ENCODE measurements at regions of chr5 and their contacts with region 1.

Region 1: DNA sequence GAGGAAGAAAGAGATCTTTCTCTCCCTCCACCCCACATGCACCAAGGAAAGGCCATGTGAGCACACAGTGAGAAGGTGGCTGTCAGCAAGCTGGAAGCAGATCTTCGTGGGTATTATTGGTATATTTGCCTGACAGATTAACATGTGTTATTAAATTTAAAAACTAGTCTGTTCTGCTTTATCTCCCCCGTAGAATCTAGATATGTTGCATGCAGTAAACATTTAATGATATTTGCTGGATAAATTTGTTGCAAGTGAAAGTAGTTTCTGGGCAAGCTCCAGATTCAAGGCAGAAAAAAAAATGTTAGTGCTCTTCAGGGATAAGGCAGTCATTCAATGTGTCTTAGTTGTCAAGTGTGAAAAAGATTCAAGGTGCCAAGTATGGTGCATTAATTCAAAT is 215.0 kb upstream of the TAS2R1 start:
- DNase-seq: no peak
- H3K4me3 ChIP-seq: no peak overlapping the region
- H3K27ac ChIP-seq: no peak overlapping the region
- H3K4me1 ChIP-seq: peaks cover 0 to 2% of the 10 kb centered on the region in 2 experiments; a peak in 1 of 4 replicates
- H3K27me3 ChIP-seq: no peaks in the 10 kb centered on the region
- CTCF ChIP-seq: no peak
- EP300 ChIP-seq: peak in 1 of 2 experiments; percentile 63; a peak in 1 of 4 replicates
- RAD21 ChIP-seq: no peak

Region 2: DNA sequence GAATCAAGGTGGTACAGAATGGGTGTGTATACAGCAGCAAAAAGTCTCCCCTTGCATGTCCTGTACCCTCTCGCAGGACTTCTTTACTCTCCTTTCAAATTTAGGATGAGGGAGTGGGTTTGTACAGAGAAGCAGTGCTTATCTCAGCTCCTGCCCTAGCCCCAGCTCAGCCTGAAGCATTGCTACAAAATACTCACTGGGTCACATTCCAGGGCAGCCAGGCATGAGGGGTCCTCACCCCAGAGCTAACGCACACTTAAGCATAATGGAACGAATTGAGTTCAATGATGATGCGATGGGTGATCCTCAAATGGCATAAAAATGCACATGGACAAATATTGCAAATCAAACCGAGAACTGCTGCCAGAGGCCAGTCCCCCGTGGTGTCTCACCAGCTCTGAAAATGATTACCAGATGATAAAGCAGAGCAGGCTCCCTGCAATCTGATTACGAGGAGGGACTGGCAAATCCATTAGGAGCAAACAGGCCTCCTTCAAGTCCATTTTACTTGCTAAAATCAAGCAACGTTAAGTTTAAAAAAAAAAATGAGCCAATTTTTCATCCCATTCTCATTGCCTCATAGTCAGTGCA is 16.6 kb after region 1 on chr5:
- CTCF ChIA-PET with region 1: interaction called, 10 read pairs
- POLR2A ChIA-PET with region 1: no interaction called
- DNase-seq: peak; percentile 79
- H3K4me3 ChIP-seq: no peak overlapping the region
- H3K27ac ChIP-seq: peak overlapping the region in 1 of 2 experiments; percentile 90; a peak in 2 of 4 replicates
- H3K4me1 ChIP-seq: peaks cover 0 to 18% of the 10 kb centered on the region in 2 experiments; a peak in 2 of 4 replicates
- H3K27me3 ChIP-seq: no peaks in the 10 kb centered on the region
- CTCF ChIP-seq: no peak
- EP300 ChIP-seq: peak in 1 of 2 experiments; percentile 97; a peak in 2 of 4 replicates
- RAD21 ChIP-seq: peak; percentile 46

Measured in SK-N-SH (cell line).